ENCODE measurements at regions of chr14 and their contacts with region 1.

Region 1: GRCh38 chr14:31561155-31561846 is at the start of gene NUBPL:
- DNase-seq: peak; percentile 98
- H3K4me3 Mint-ChIP-seq: peak within 1 kb of the TSS; percentile 95
- H3K27ac Mint-ChIP-seq: peak within 1 kb of the TSS; percentile 93
- H3K4me1 Mint-ChIP-seq: peaks cover 20% of the 10 kb centered on the region
- H3K27me3 Mint-ChIP-seq: peaks cover 1% of the 10 kb centered on the region
- total RNA-seq, gene NUBPL: 6.9 to 9.1 TPM

Region 2: DNA sequence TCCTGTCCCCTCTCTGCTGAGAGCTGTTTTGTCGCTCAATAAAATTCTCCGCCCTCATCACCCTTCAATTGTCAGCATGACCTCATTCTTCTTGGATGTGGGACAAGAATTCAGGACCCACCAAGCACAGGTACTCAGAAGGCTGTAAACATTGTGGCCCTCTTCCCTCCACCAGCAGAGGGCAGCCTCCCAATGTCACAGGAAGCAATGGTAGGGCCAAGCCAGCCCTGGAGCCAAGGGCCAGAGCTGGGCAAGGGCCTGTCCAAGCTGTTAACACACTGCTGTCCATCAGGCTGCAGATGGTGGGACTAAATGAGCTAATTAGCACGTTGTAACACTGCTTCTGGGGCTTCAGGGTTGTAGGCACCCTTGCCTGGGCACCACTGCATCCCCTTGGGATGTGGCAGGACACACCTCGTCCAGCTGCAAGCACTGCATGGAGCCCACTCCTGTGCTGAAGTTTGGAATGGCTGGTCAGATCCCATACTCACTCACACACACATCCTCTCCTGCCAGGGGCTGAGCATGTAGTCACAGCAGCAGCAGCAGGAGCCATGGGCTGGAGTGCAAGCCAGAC is 291.0 kb before region 1 on chr14:
- CTCF ChIA-PET with region 1: no interaction called
- POLR2A ChIA-PET with region 1: no interaction called
- intact Hi-C with region 1: loop called (anchors 1 kb)
- DNase-seq: peak; percentile 49
- H3K4me3 Mint-ChIP-seq: no peak overlapping the region
- H3K27ac Mint-ChIP-seq: no peak overlapping the region
- H3K4me1 Mint-ChIP-seq: peaks cover 17% of the 10 kb centered on the region
- H3K27me3 Mint-ChIP-seq: no peaks in the 10 kb centered on the region

Region 3: DNA sequence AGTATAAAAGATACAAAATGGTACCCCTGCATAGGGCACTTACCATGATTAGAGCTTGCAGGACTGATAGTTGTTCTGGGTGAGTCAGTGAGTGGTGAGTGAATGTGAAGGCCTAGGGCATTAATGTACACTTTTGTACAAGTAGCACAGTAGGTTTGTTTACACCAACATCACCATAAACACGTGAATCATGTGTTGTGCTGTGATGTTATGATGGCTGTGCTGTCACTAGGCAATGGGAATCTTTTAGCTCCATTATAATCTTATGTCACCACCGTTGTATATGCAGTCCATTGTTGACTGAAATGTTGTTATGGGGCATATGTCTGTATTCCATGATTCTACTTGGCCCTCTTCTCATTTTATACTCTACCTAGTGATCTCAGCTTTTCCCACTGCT is 11.7 kb after region 1 on chr14:
- CTCF ChIA-PET with region 1: no interaction called
- POLR2A ChIA-PET with region 1: no interaction called
- intact Hi-C with region 1: no loop called
- DNase-seq: no peak
- H3K4me3 Mint-ChIP-seq: no peak overlapping the region
- H3K27ac Mint-ChIP-seq: no peak overlapping the region
- H3K4me1 Mint-ChIP-seq: peaks cover 9% of the 10 kb centered on the region
- H3K27me3 Mint-ChIP-seq: no peaks in the 10 kb centered on the region

Region 4: DNA sequence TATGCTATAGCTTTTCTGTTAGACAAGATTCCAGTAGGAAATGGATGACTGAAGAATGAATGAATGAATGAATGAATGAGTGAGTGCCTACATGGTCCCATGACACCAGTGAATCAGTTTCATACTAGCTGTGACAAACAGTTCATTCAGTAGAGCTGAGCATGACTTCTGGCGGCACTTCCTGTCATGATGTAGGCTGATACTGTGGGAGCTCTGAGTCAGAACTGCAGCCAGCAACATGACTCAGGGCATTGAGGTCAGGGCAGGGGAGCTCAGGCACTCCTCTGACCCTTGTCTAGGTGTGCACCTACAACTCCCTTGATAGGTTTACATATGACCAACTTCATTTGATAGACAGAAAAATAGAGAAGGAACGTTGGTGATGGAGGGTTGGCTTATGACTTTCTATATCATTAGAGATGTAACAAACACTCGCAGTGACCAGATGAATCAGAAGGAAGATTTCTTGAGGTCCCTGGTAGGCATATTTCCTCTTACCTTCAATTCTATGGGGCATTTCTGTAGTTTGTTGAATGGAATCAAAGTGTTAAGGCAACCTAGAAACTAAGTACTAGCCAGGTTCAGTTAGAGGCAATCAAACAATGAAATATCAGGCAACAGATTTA is 376.5 kb after region 1 on chr14:
- CTCF ChIA-PET with region 1: no interaction called
- POLR2A ChIA-PET with region 1: no interaction called
- intact Hi-C with region 1: loop called (anchors 5 kb)
- DNase-seq: peak; percentile 91
- H3K4me3 Mint-ChIP-seq: peak overlapping the region; percentile 16
- H3K27ac Mint-ChIP-seq: peak overlapping the region; percentile 80
- H3K4me1 Mint-ChIP-seq: peaks cover 25% of the 10 kb centered on the region
- H3K27me3 Mint-ChIP-seq: no peaks in the 10 kb centered on the region